BJ (cell line): ENCODE measurements at regions of chr12 and their contacts with region 1.

Region 1: GRCh38 chr12:95544756-95545155 is 6.5 kb downstream of the USP44 start:
- DNase-seq: no peak
- H3K4me3 ChIP-seq: no peak overlapping the region
- H3K27me3 ChIP-seq: peaks cover 8% of the 10 kb centered on the region
- CTCF ChIP-seq: no peak

Region 2: GRCh38 chr12:95390192-95390591 is 154.6 kb before region 1 on chr12:
- CTCF ChIA-PET with region 1: no interaction called
- POLR2A ChIA-PET with region 1: no interaction called
- DNase-seq: no peak
- H3K4me3 ChIP-seq: no peak overlapping the region
- H3K27me3 ChIP-seq: no peaks in the 10 kb centered on the region; the same call in 1 of the 2 replicates
- CTCF ChIP-seq: no peak

Region 3: GRCh38 chr12:95532851-95533250 is 11.9 kb before region 1 on chr12:
- CTCF ChIA-PET with region 1: interaction called, 10 read pairs
- POLR2A ChIA-PET with region 1: no interaction called
- DNase-seq: no peak
- H3K4me3 ChIP-seq: no peak overlapping the region
- H3K27me3 ChIP-seq: no peaks in the 10 kb centered on the region
- CTCF ChIP-seq: no peak

Region 4: GRCh38 chr12:95633049-95633545 is 88.3 kb after region 1 on chr12:
- CTCF ChIA-PET with region 1: no interaction called
- POLR2A ChIA-PET with region 1: no interaction called
- DNase-seq: peak; percentile 40
- H3K4me3 ChIP-seq: no peak overlapping the region
- H3K27me3 ChIP-seq: no peaks in the 10 kb centered on the region
- CTCF ChIP-seq: no peak